ENCODE measurements at regions of chr10 and their contacts with region 1.

Region 1: DNA sequence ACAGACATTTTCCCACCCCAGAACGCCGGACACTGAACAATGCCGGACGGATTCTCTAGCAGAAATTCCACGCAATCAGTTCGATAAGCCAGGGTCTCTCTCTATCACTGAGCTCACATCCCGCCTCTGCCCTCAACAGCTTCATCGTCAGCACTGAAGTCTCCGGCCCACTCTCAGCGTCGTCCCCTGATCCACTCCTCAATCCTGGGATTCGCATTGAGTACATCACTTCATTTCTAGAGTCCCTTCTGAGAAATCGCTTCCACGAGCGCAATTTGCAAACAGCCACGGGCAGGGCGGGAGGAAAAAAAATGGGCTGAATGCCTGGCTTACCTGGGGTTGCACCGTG is 365 bp downstream of the YME1L1 start:
- DNase-seq: peak; percentile 11

Region 2: GRCh38 chr10:27052646-27053045 is 101.2 kb before region 1 on chr10:
- CTCF ChIA-PET with region 1: no interaction called
- POLR2A ChIA-PET with region 1: no interaction called
- DNase-seq: no peak

Region 3: GRCh38 chr10:27143686-27144085 is 10.1 kb before region 1 on chr10:
- CTCF ChIA-PET with region 1: interaction called, 3 read pairs
- POLR2A ChIA-PET with region 1: interaction called, 12 read pairs
- DNase-seq: no peak